T-cell (primary cell): ENCODE measurements at regions of chr3 and their contacts with region 1.

Region 1: DNA sequence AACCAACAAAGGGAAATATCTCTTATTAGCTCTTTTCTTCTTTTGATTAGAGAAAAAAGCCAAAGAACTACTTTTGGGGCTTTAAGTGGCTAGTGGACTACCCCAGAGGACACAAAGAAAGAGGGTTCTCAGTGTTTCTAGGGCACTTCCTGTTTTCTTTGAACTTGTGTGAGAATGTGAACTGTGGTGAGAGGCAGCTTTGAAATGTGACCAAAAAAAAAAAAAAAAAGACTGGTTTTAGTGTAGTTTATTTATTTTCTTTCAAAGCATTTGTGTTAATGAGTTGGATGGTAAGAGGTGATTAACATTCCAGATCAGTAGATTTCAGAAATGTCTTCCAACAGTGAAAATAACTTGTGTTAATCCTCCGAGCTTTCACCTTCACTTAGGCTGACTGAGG is 32.4 kb downstream of the SELENOT start:
- DNase-seq: peak in 1 of 35 experiments; percentile 57
- ATAC-seq: peak; percentile 64 to 90 (median 76)
- H3K4me3 ChIP-seq: no peak overlapping the region
- H3K4me3 Mint-ChIP-seq: peak overlapping the region; percentile 2 to 41 (median 2)
- H3K27ac ChIP-seq: peak overlapping the region; percentile 76
- H3K27ac Mint-ChIP-seq: peak overlapping the region; percentile 74 to 83
- H3K4me1 ChIP-seq: peaks cover 6 to 20% of the 10 kb centered on the region in 2 experiments
- H3K4me1 Mint-ChIP-seq: peaks cover 27 to 40% (median 29%) of the 10 kb centered on the region in 3 donors
- H3K27me3 ChIP-seq: no peaks in the 10 kb centered on the region
- H3K27me3 Mint-ChIP-seq: no peaks in the 10 kb centered on the region

Region 2: GRCh38 chr3:150582620-150583019 is 52.9 kb before region 1 on chr3:
- CTCF ChIA-PET with region 1: no interaction called
- POLR2A ChIA-PET with region 1: interaction called in 1 of 2 experiments, 14 read pairs
- DNase-seq: no peak
- ATAC-seq: no peak
- H3K4me3 ChIP-seq: no peak overlapping the region
- H3K4me3 Mint-ChIP-seq: no peak overlapping the region
- H3K27ac ChIP-seq: no peak overlapping the region
- H3K27ac Mint-ChIP-seq: peak overlapping the region in 1 of 2 donors; percentile 66
- H3K4me1 ChIP-seq: no peaks in the 10 kb centered on the region
- H3K4me1 Mint-ChIP-seq: peaks cover 0 to 8% (median 4%) of the 10 kb centered on the region in 3 donors
- H3K27me3 ChIP-seq: no peaks in the 10 kb centered on the region
- H3K27me3 Mint-ChIP-seq: no peaks in the 10 kb centered on the region

Region 3: DNA sequence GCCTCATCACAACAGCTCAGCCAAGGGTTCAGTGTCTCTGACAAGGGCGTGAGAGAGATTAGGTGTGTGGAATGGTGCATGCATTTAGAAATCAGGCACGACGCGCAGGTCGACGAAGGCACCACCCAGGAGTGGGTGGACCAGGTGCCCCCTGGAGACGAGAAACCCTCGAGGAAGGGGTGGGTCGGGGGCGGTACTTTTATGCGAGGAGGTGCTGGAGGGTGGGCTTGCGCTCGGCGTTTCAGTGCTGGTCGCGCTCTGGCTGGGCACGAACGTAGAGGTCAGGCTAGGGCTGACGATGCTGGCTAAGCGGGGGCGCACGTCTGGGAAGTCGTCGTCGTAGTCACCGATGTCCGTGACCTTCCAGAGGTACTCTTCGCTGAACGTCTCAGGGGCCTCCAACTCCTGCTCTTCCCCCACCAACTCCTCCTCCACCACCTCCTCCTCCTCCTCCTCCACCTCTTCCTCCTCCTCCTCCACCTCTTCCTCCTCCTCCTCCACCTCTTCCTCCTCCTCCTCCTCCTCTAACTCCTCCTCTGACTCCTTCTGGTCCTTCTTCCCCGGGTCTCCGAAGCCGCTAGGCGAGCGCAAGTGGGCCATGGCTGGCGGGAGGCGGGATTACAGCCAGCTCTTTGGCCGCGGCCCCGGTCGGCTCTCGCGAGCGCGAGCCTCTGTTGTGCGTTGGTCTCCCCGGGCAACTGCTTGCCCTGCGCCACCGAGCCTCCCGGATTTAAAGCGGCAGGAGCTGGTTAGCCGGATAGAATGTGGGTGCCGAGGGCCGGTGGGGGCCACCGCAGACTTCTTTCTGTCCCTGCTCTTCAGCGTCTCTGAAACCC is 68.0 kb after region 1 on chr3 and contains the start of gene ERICH6:
- CTCF ChIA-PET with region 1: interaction called in 1 of 2 experiments, 6 read pairs
- POLR2A ChIA-PET with region 1: interaction called in 1 of 2 experiments, 21 read pairs
- DNase-seq: peak; percentile 44 to 84 (median 69)
- ATAC-seq: peak; percentile 84 to 89 (median 84)
- H3K4me3 ChIP-seq: peak within 1 kb of the TSS; percentile 87 to 89
- H3K4me3 Mint-ChIP-seq: peak within 1 kb of the TSS; percentile 93 to 98 (median 96)
- H3K27ac ChIP-seq: peak within 1 kb of the TSS; percentile 94
- H3K27ac Mint-ChIP-seq: peak within 1 kb of the TSS; percentile 96 to 97
- H3K4me1 ChIP-seq: peaks cover 9 to 23% of the 10 kb centered on the region in 2 experiments
- H3K4me1 Mint-ChIP-seq: peaks cover 17 to 28% (median 21%) of the 10 kb centered on the region in 3 donors
- H3K27me3 ChIP-seq: no peaks in the 10 kb centered on the region
- H3K27me3 Mint-ChIP-seq: no peaks in the 10 kb centered on the region
- total RNA-seq, gene ERICH6: 0.26 to 0.39 (median 0.28) TPM in 3 of 5 donors, not detected in the others

Region 4: DNA sequence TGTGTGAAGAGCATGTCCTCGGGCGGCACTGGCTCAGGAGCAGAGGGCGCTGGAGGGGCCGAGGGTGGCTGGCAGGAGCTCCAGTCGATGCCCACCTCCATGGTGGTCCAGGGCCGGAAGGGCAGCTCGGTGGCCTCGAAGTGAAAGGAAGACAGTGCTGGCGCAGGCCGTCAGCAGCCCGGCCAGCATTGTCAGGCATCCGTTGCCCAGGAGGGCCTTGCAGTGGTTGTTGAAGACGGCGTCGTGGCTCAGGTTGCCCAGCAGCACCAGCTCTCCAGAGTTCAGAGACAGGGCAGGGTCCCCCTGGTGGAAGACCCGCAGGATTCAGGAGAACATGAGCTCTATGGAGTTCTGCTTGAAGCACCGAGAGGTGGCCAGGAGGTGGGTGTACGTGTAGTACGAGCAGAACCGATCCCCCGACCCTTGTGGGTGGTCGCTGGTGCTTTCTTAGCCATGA is 143.9 kb after region 1 on chr3:
- CTCF ChIA-PET with region 1: no interaction called
- POLR2A ChIA-PET with region 1: interaction called in 1 of 2 experiments, 11 read pairs
- DNase-seq: no peak
- ATAC-seq: no peak
- H3K4me3 ChIP-seq: no peak overlapping the region
- H3K4me3 Mint-ChIP-seq: no peak overlapping the region
- H3K27ac ChIP-seq: no peak overlapping the region
- H3K27ac Mint-ChIP-seq: no peak overlapping the region
- H3K4me1 ChIP-seq: no peaks in the 10 kb centered on the region
- H3K4me1 Mint-ChIP-seq: no peaks in the 10 kb centered on the region
- H3K27me3 ChIP-seq: peaks cover 0 to 4% of the 10 kb centered on the region in 2 experiments
- H3K27me3 Mint-ChIP-seq: no peaks in the 10 kb centered on the region